ENCODE measurements at regions of chr20 and their contacts with region 1.

Region 1: DNA sequence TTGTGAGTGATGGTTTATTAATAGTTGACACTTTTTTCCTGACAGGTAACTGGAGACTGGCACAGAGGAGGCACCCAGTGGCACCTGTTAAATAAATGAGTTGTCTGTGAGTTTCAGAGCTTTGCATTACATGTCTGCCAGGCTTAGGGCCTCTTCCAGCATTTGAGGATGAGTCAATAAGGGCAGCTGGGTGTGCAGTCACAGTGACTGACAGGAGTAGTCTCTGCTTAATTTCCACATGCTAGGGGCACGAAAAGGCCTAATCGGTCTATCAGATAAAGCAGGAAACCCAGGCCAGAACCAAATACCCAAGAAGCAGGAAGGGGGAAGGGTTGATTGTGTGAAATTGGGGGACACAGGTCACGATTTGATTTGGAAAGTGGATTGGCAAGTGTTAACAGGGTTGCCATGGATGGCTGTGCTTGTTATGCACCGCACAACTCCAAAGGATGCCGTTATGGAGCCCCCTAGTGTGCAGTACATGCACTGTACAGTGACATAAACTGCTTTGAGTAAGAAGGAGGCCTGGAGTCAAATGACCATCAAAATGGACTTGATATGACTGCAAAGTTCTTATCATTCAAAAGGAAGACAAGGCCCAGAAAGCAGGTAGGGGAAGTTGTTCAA is 111.9 kb upstream of the GGTLC1 start:
- DNase-seq: peak; percentile 81
- ATAC-seq: peak; percentile 95
- H3K4me3 Mint-ChIP-seq: no peak overlapping the region
- H3K27ac Mint-ChIP-seq: peak overlapping the region; percentile 49
- H3K4me1 Mint-ChIP-seq: peaks cover 20% of the 10 kb centered on the region
- H3K27me3 Mint-ChIP-seq: peaks cover 28% of the 10 kb centered on the region

Region 2: GRCh38 chr20:23937303-23938117 is 163.0 kb before region 1 on chr20:
- CTCF ChIA-PET with region 1: interaction called, 25 read pairs
- DNase-seq: peak; percentile 73
- ATAC-seq: peak; percentile 87
- H3K4me3 Mint-ChIP-seq: no peak overlapping the region
- H3K27ac Mint-ChIP-seq: no peak overlapping the region
- H3K4me1 Mint-ChIP-seq: no peaks in the 10 kb centered on the region
- H3K27me3 Mint-ChIP-seq: peaks cover 8% of the 10 kb centered on the region

Region 3: DNA sequence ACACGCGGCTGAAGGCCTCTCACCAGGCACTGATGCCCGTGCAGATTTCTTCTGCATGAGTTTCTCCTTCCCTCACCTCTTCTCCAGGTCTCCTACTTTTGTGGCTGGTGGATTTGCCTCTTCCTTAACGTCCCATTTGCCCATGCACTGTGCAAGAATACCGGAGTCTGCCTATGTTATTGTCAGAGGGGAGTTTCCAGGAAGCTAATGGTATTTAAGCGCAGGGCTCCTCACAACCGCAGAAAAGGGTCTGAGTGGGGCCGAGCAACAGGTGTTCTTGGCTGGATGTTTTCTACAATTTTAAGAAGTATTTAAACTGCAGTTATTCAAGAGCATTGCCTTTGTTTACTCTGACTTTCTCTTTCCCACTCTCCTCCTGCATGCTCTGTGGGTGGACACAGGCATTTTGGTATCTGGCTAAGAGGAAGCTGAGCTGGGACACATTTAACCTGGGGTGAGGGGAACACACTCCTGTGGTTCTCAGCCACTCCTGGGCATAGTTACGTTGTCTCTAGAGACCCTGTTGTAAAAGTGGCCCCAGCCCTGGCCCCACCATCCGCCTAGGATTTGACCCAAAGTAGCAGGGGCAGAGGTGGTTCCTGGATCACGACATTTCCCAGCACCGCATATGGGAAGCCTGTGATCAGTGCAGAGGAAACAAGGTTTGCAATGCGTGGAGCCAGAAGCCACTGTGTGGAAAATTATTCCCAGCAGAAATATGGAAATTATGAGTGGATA is 146.3 kb before region 1 on chr20:
- CTCF ChIA-PET with region 1: no interaction called
- DNase-seq: no peak
- ATAC-seq: no peak
- H3K4me3 Mint-ChIP-seq: no peak overlapping the region
- H3K27ac Mint-ChIP-seq: no peak overlapping the region
- H3K4me1 Mint-ChIP-seq: no peaks in the 10 kb centered on the region
- H3K27me3 Mint-ChIP-seq: peaks cover 2% of the 10 kb centered on the region

Region 4: GRCh38 chr20:24160563-24161375 is 60.3 kb after region 1 on chr20:
- CTCF ChIA-PET with region 1: interaction called, 21 read pairs
- DNase-seq: peak; percentile 52
- ATAC-seq: no peak
- H3K4me3 Mint-ChIP-seq: no peak overlapping the region
- H3K27ac Mint-ChIP-seq: no peak overlapping the region
- H3K4me1 Mint-ChIP-seq: peaks cover 16% of the 10 kb centered on the region
- H3K27me3 Mint-ChIP-seq: peaks cover 5% of the 10 kb centered on the region

Region 5: GRCh38 chr20:24176661-24177060 is 76.2 kb after region 1 on chr20:
- CTCF ChIA-PET with region 1: no interaction called
- DNase-seq: no peak
- ATAC-seq: no peak
- H3K4me3 Mint-ChIP-seq: no peak overlapping the region
- H3K27ac Mint-ChIP-seq: no peak overlapping the region
- H3K4me1 Mint-ChIP-seq: no peaks in the 10 kb centered on the region
- H3K27me3 Mint-ChIP-seq: peaks cover 40% of the 10 kb centered on the region